ENCODE measurements at regions of chr2 and their contacts with region 1.

Region 1: DNA sequence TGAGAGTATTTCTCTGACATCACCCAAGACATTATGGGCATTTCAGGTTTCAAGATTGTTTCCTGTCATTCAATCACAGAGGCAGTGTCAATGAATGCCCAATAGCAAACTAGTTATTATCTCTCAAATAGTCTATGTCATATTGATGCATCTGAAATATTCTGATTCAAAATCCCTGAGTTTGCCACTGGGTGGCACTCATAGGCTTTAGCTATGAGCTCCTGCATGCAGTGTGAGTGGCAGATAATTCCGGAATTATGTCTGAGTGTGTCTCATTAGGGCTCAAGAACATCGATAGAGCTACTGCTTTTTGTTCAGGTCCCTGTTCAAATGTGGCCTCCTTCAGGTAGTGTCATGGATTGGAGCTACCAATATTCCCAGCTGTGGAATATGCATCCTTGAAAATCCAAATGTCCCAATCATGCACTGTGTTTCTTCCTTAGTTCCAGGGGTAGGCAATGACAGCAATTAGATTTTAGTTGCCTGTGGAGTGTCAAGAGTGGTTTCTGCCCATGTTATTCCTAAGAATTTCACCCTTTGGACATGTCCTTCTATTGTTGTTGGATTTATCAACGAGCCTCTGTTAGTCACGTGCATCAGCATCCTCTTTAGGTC is 7.8 kb upstream of the OR6B3 start:
- DNase-seq: peak; percentile 60
- H3K4me3 Mint-ChIP-seq: no peak overlapping the region
- H3K27ac Mint-ChIP-seq: no peak overlapping the region
- H3K4me1 Mint-ChIP-seq: no peaks in the 10 kb centered on the region
- H3K27me3 Mint-ChIP-seq: peaks cover 33% of the 10 kb centered on the region

Region 2: GRCh38 chr2:240143801-240144648 is 82.9 kb after region 1 on chr2:
- CTCF ChIA-PET with region 1: interaction called, 92 read pairs
- DNase-seq: peak; percentile 86
- H3K4me3 Mint-ChIP-seq: no peak overlapping the region
- H3K27ac Mint-ChIP-seq: no peak overlapping the region
- H3K4me1 Mint-ChIP-seq: no peaks in the 10 kb centered on the region
- H3K27me3 Mint-ChIP-seq: peaks cover 20% of the 10 kb centered on the region

Measured in activated naive CD4-positive, alpha-beta T cell treated with anti-CD3 and anti-CD28 coated beads, Interleukin-2, amount 10 ng/mL, durations not matched to agents 7 days and 5 days (primary cell).